Activated CD4-positive, alpha-beta memory T cell treated with anti-CD3 and anti-CD28 coated beads for 36 hours (primary cell): ENCODE measurements at regions of chr3 and their contacts with region 1.

Region 1: DNA sequence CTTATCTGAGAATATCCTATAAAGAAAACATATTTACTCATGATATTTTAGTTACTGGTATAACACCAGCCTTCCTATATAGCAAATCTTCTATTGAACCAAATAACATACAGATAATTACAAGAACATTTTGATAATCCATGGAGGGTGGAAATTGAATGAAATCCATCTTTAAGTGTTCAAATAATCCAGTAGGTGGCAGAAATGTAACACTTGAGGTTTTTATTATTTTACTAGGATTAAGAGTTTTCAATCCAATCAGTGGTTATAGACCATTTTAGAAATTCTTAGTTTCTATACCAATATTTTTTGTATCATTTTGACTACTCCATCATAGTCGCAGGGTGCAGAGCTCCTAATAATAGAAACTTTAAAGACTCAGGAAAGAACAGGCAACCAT is 101.9 kb upstream of the KCNH8 start:
- DNase-seq: no peak
- H3K4me3 Mint-ChIP-seq: no peak overlapping the region
- H3K27ac Mint-ChIP-seq: no peak overlapping the region
- H3K4me1 Mint-ChIP-seq: no peaks in the 10 kb centered on the region
- H3K27me3 Mint-ChIP-seq: peaks cover 1% of the 10 kb centered on the region

Region 2: DNA sequence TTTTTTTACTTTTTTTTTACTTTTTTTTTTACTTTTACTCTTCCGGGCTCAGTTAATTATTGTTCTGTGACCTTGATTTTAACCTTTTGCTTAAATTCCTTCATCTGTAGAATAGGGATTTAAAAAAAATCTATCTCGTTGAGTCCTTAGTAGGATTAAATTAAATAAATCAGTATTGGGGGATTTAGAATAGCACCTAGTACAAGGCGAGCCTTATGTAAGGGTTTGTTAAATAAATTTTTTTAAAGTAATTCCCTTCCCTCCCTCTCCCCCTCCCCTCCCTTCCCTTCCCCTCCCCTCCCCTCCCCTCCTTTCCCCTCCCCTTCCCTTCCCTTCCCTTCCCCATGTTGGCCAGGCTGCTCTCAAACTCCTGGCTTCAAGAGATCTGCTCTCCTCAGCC is 185.3 kb before region 1 on chr3:
- CTCF ChIA-PET with region 1: no interaction called
- POLR2A ChIA-PET with region 1: no interaction called
- intact Hi-C with region 1: no loop called
- DNase-seq: no peak
- H3K4me3 Mint-ChIP-seq: no peak overlapping the region
- H3K27ac Mint-ChIP-seq: no peak overlapping the region
- H3K4me1 Mint-ChIP-seq: no peaks in the 10 kb centered on the region
- H3K27me3 Mint-ChIP-seq: peaks cover 10% of the 10 kb centered on the region

Region 3: GRCh38 chr3:19139862-19140261 is 93.4 kb after region 1 on chr3:
- CTCF ChIA-PET with region 1: no interaction called
- POLR2A ChIA-PET with region 1: no interaction called
- intact Hi-C with region 1: no loop called
- DNase-seq: no peak
- H3K4me3 Mint-ChIP-seq: no peak overlapping the region
- H3K27ac Mint-ChIP-seq: no peak overlapping the region
- H3K4me1 Mint-ChIP-seq: no peaks in the 10 kb centered on the region
- H3K27me3 Mint-ChIP-seq: peaks cover 2% of the 10 kb centered on the region

Region 4: DNA sequence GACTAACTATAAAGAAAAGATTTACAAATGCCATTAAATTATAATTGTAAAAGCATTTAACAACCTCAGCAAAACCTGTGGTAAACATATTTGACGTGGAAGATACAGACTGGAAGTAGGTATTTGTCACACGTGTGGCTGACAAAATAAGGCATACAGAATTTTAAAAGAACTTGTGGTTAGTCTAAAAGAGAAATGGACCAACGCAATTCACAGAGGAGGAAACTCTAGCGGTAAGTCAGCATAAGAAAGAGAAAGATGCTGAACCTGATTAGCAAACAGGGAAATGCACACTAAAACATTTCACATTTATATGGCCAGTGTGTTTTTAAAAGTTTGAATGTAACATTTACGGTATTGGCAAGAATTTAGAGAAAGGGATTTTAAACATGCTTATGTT is 137.1 kb after region 1 on chr3:
- CTCF ChIA-PET with region 1: no interaction called
- POLR2A ChIA-PET with region 1: no interaction called
- intact Hi-C with region 1: no loop called
- DNase-seq: no peak
- H3K4me3 Mint-ChIP-seq: no peak overlapping the region
- H3K27ac Mint-ChIP-seq: no peak overlapping the region
- H3K4me1 Mint-ChIP-seq: no peaks in the 10 kb centered on the region
- H3K27me3 Mint-ChIP-seq: peaks cover 3% of the 10 kb centered on the region

Region 5: DNA sequence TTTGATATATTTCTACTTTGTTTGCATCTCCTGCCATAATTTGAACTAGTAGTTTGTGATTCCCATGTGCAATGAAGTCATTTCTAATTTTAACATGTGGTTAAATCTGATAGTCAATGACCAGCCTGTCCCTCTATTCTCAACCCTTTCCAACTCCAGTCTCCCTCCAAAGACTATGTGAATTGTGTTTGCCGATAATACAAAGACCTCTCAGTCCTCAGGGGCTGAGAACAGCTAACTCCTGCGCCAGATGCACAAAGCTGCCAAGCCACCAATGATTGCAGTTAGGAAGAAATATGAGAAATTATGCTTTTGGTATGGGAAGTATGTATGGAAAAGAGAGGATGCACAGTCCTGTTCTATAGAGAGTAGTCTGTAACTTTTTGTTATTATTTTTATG is 155.9 kb after region 1 on chr3:
- CTCF ChIA-PET with region 1: no interaction called
- POLR2A ChIA-PET with region 1: no interaction called
- intact Hi-C with region 1: no loop called
- DNase-seq: no peak
- H3K4me3 Mint-ChIP-seq: no peak overlapping the region
- H3K27ac Mint-ChIP-seq: no peak overlapping the region
- H3K4me1 Mint-ChIP-seq: no peaks in the 10 kb centered on the region
- H3K27me3 Mint-ChIP-seq: no peaks in the 10 kb centered on the region

Region 6: GRCh38 chr3:19543212-19543841 is 496.9 kb after region 1 on chr3:
- CTCF ChIA-PET with region 1: no interaction called
- POLR2A ChIA-PET with region 1: no interaction called
- intact Hi-C with region 1: loop called (anchors 2 kb)
- DNase-seq: no peak
- H3K4me3 Mint-ChIP-seq: no peak overlapping the region
- H3K27ac Mint-ChIP-seq: no peak overlapping the region
- H3K4me1 Mint-ChIP-seq: no peaks in the 10 kb centered on the region
- H3K27me3 Mint-ChIP-seq: no peaks in the 10 kb centered on the region

Region 7: DNA sequence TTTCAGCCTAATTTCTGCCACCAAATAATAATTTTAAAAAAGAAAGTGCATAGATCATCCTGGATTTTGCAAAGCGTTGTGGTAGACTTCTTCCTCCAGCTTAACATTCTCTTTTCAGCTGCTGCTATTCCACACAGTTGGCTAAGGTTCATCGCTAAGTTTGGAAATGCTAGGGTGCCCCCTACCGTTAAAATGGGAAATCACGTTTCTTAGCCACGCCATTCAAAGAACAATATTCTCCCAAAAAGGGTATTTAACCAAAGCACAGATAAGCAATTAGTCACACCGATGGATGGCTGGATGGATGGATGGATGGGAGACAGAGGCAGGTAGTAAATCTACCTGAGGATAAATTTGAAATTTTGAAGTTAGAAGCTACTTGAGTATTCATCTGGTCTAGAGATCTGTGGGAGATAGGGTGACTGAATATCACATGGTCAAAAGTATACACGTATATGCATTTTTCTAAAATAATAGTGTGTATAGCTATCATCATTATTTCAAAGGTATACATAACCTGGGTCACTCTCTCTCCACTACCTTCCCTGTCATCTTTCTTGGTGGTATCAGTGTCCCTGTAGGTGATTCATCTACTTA is 820.4 kb after region 1 on chr3:
- CTCF ChIA-PET with region 1: interaction called, 4 read pairs
- POLR2A ChIA-PET with region 1: no interaction called
- intact Hi-C with region 1: loop called (anchors 5 kb)
- DNase-seq: peak; percentile 44
- H3K4me3 Mint-ChIP-seq: no peak overlapping the region
- H3K27ac Mint-ChIP-seq: no peak overlapping the region
- H3K4me1 Mint-ChIP-seq: no peaks in the 10 kb centered on the region
- H3K27me3 Mint-ChIP-seq: peaks cover 5% of the 10 kb centered on the region